ENCODE measurements at regions of chr2 and their contacts with region 1.

Region 1: GRCh38 chr2:161160226-161161069 is at the start of gene TANK:
- DNase-seq: peak; percentile 92
- ATAC-seq: peak; percentile 93
- H3K4me3 ChIP-seq: peak within 1 kb of the TSS; percentile 87
- H3K27ac ChIP-seq: peak within 1 kb of the TSS; percentile 86
- H3K4me1 ChIP-seq: peaks cover 18% of the 10 kb centered on the region
- H3K27me3 ChIP-seq: no peaks in the 10 kb centered on the region
- CTCF ChIP-seq: no peak
- total RNA-seq, gene TANK: 22.2 and 23.7 TPM in 2 replicates

Region 2: DNA sequence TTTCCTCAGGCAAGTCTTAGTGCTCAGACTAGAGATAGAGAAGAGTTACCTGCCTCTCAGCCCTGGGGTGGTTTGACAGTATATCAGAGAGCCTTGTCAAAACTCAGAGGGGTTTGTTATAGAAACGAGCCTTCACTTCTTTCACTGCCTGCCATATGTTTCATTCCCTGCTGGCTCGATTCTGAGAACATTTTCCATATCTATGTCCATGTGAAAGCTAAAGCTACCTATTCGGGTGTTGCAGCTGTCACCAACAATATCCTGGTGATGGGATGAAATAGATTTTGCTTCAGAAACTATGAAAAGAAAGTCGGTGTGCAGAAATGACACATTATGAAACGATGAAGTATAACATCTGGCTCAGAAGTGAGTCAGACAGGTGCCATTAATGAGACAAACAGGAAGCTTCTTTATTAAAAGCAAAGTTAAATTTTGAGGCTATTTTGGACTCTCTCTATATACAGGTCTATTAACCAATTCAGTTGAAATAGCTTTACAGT is 56.3 kb before region 1 on chr2:
- CTCF ChIA-PET with region 1: no interaction called
- POLR2A ChIA-PET with region 1: no interaction called
- intact Hi-C with region 1: loop called (anchors 1 kb)
- DNase-seq: peak; percentile 53
- ATAC-seq: peak; percentile 78
- H3K4me3 ChIP-seq: no peak overlapping the region
- H3K27ac ChIP-seq: no peak overlapping the region
- H3K4me1 ChIP-seq: peaks cover 21% of the 10 kb centered on the region
- H3K27me3 ChIP-seq: no peaks in the 10 kb centered on the region
- CTCF ChIP-seq: no peak

Region 3: GRCh38 chr2:161122772-161123530 is 37.5 kb before region 1 on chr2:
- CTCF ChIA-PET with region 1: no interaction called
- POLR2A ChIA-PET with region 1: no interaction called
- intact Hi-C with region 1: loop called (anchors 1 kb)
- DNase-seq: peak; percentile 88
- ATAC-seq: peak; percentile 97
- H3K4me3 ChIP-seq: peak overlapping the region; percentile 61
- H3K27ac ChIP-seq: peak overlapping the region; percentile 98
- H3K4me1 ChIP-seq: peaks cover 37% of the 10 kb centered on the region
- H3K27me3 ChIP-seq: no peaks in the 10 kb centered on the region
- CTCF ChIP-seq: no peak

Region 4: DNA sequence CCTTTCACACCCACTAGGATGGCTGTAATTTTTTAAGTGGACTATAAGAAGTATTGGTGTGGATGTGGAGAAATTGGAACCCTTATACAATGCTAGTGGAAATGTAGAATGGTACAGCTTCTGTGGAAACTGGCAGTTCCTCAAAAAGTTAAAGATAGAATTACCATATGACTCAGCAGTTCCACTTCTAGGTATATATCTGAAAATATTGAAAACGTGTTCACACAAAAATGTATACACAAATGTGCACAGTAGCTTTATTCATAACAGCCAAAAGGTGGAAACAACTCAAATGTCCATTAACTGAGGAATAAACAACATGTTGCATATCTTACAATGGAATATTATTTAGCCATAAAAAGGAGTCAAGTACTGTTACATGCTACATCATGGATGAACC is 17.5 kb after region 1 on chr2:
- CTCF ChIA-PET with region 1: no interaction called
- POLR2A ChIA-PET with region 1: no interaction called
- intact Hi-C with region 1: no loop called
- DNase-seq: no peak
- ATAC-seq: no peak
- H3K4me3 ChIP-seq: no peak overlapping the region
- H3K27ac ChIP-seq: no peak overlapping the region
- H3K4me1 ChIP-seq: no peaks in the 10 kb centered on the region
- H3K27me3 ChIP-seq: no peaks in the 10 kb centered on the region
- CTCF ChIP-seq: no peak

Region 5: GRCh38 chr2:161208527-161209139 is 48.2 kb after region 1 on chr2:
- CTCF ChIA-PET with region 1: no interaction called
- POLR2A ChIA-PET with region 1: no interaction called
- intact Hi-C with region 1: loop called (anchors 5 kb)
- DNase-seq: peak; percentile 87
- ATAC-seq: peak; percentile 99
- H3K4me3 ChIP-seq: no peak overlapping the region
- H3K27ac ChIP-seq: no peak overlapping the region
- H3K4me1 ChIP-seq: peaks cover 12% of the 10 kb centered on the region
- H3K27me3 ChIP-seq: no peaks in the 10 kb centered on the region
- CTCF ChIP-seq: no peak

Region 6: DNA sequence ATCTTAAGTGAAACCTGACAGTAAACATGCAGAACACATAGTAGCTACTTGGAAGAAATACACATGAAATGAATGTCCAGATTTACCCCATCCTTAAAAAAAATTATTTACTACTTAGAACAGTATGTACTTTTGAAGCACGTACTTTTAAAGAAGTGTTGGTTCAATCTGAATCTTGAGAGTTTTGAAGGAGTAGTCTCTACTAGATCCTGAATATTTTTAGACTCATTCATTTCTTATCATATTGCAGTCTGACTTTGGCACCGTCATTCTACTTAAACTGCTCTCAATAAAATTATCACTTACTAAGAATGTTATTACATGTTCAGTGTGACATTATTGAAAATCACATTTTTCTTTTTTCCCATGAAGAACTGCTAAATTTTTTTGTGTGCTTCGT is 725.8 kb after region 1 on chr2:
- CTCF ChIA-PET with region 1: no interaction called
- POLR2A ChIA-PET with region 1: no interaction called
- intact Hi-C with region 1: no loop called
- DNase-seq: no peak
- ATAC-seq: no peak
- H3K4me3 ChIP-seq: no peak overlapping the region
- H3K27ac ChIP-seq: no peak overlapping the region
- H3K4me1 ChIP-seq: no peaks in the 10 kb centered on the region
- H3K27me3 ChIP-seq: no peaks in the 10 kb centered on the region
- CTCF ChIP-seq: no peak